ENCODE measurements at regions of chr11 and their contacts with region 1.

Region 1: GRCh38 chr11:128848815-128849455 is 18.2 kb downstream of the KCNJ1 start:
- DNase-seq: peak; percentile 77
- ATAC-seq: peak; percentile 72
- H3K4me3 ChIP-seq: no peak overlapping the region
- H3K4me3 Mint-ChIP-seq: no peak overlapping the region
- H3K27ac ChIP-seq: no peak overlapping the region
- H3K27ac Mint-ChIP-seq: peak overlapping the region; percentile 65
- H3K4me1 ChIP-seq: peaks cover 45 to 60% of the 10 kb centered on the region in 2 donors
- H3K4me1 Mint-ChIP-seq: peaks cover 52% of the 10 kb centered on the region
- H3K27me3 ChIP-seq: no peaks in the 10 kb centered on the region
- H3K27me3 Mint-ChIP-seq: no peaks in the 10 kb centered on the region
- CTCF ChIP-seq: peak; percentile 91

Region 2: GRCh38 chr11:128725630-128726319 is 123.2 kb before region 1 on chr11:
- CTCF ChIA-PET with region 1: no interaction called
- POLR2A ChIA-PET with region 1: no interaction called
- intact Hi-C with region 1: no loop called
- DNase-seq: peak; percentile 90
- ATAC-seq: peak; percentile 67
- H3K4me3 ChIP-seq: peak overlapping the region; percentile 27 to 57 (median 43)
- H3K4me3 Mint-ChIP-seq: peak overlapping the region; percentile 93
- H3K27ac ChIP-seq: peak overlapping the region; percentile 70 to 88
- H3K27ac Mint-ChIP-seq: peak overlapping the region; percentile 92
- H3K4me1 ChIP-seq: peaks cover 98 to 100% of the 10 kb centered on the region in 2 donors
- H3K4me1 Mint-ChIP-seq: peaks cover 96% of the 10 kb centered on the region
- H3K27me3 ChIP-seq: no peaks in the 10 kb centered on the region
- H3K27me3 Mint-ChIP-seq: no peaks in the 10 kb centered on the region
- CTCF ChIP-seq: no peak

Region 3: GRCh38 chr11:128776424-128777284 is 72.3 kb before region 1 on chr11:
- CTCF ChIA-PET with region 1: interaction called, 21 read pairs
- POLR2A ChIA-PET with region 1: interaction called, 3 read pairs
- intact Hi-C with region 1: no loop called
- DNase-seq: peak; percentile 58
- ATAC-seq: peak; percentile 35
- H3K4me3 ChIP-seq: no peak overlapping the region
- H3K4me3 Mint-ChIP-seq: no peak overlapping the region
- H3K27ac ChIP-seq: no peak overlapping the region
- H3K27ac Mint-ChIP-seq: peak overlapping the region; percentile 51
- H3K4me1 ChIP-seq: peaks cover 25 to 36% of the 10 kb centered on the region in 2 donors
- H3K4me1 Mint-ChIP-seq: peaks cover 42% of the 10 kb centered on the region
- H3K27me3 ChIP-seq: no peaks in the 10 kb centered on the region
- H3K27me3 Mint-ChIP-seq: no peaks in the 10 kb centered on the region
- CTCF ChIP-seq: peak; percentile 60

Region 4: DNA sequence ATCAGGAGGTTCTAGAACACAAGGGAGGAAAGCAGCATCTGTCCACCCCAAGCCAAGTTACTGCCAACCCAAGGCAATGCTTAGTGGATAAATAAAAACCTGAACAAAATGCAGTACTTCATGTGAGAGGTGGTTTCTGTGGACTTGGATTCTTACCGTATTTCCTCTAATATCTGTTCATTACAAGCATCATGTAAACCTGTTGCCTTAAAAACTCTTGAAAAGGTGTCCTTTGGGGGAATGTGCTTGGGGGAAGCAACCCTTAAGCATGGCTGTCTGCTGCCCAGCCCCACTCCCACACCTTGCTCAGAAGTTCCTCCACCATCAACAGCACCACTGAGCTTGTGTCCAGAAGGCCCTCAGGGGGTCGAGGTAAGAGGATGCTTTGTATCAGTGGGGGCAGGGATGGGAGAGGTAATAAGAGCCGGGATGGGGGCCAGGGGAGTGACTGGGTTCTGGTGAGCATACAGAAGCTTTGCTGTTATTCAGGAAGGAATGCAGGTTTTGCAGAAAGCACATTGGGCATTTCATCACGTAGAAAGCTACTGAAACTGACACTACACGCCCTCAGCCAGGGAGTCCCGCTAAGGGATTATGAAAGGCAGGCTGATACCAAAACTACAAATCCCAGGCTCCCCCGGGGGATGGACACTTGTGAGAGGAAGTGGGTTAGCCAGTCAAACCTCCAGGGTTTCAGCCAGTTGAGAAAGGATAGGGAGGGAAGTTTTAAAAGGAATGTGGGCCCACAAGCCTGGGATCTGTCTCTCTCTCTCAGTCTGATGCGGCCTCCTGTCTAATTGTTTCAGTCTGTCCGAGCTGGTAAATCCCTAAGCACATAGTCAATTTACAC is 33.9 kb before region 1 on chr11:
- CTCF ChIA-PET with region 1: no interaction called
- POLR2A ChIA-PET with region 1: no interaction called
- intact Hi-C with region 1: loop called (anchors 5 kb)
- DNase-seq: no peak
- ATAC-seq: no peak
- H3K4me3 ChIP-seq: no peak overlapping the region
- H3K4me3 Mint-ChIP-seq: no peak overlapping the region
- H3K27ac ChIP-seq: peak overlapping the region in 1 of 2 donors; percentile 9
- H3K27ac Mint-ChIP-seq: peak overlapping the region; percentile 37
- H3K4me1 ChIP-seq: no peaks in the 10 kb centered on the region
- H3K4me1 Mint-ChIP-seq: peaks cover 4% of the 10 kb centered on the region
- H3K27me3 ChIP-seq: no peaks in the 10 kb centered on the region
- H3K27me3 Mint-ChIP-seq: no peaks in the 10 kb centered on the region
- CTCF ChIP-seq: no peak

Region 5: DNA sequence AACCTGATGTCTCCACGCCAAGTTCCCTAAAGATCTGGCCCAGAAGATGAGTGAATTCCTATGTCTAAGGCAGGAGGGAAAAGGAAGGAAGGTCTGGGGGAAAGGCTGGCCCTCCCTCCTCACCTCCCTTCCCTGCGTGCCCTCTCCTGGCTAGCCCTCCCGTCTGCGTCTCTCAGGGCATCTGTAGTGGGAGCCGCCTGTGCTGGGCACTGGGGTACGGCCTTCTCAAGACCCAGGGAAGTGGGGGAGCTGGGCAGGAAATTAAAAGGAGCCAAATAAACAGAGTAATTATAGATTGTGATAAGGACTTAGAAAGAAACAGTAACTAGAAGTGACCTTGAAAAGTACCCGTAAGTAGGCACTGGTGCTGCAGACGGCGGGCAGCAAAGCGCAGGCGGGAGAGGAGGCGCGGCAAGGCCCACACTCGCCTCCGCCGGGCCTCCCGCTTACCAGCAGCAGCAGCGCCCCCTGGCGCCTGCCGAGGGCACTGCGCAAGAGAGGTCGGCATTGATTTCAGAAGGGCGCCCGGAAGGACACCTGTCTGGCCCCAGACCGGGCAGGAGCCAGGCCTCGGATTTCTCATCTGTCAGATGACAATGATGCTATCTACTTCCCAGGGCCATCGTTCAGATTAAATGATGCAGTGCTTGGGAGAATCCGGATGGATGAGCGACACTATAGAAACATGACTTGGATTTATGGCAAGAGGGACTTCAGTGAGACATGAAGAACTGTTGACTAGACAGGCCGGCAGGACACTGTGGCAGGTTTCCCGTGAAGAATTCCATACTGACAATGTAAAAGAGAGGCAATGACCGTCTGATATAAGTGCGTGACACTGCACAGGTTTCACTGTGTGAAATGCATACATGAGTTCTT is 10.9 kb after region 1 on chr11:
- CTCF ChIA-PET with region 1: interaction called, 22 read pairs
- POLR2A ChIA-PET with region 1: no interaction called
- intact Hi-C with region 1: loop called (anchors 2 kb)
- DNase-seq: peak; percentile 87
- ATAC-seq: peak; percentile 99
- H3K4me3 ChIP-seq: no peak overlapping the region
- H3K4me3 Mint-ChIP-seq: no peak overlapping the region
- H3K27ac ChIP-seq: no peak overlapping the region
- H3K27ac Mint-ChIP-seq: peak overlapping the region; percentile 59
- H3K4me1 ChIP-seq: peaks cover 9 to 17% of the 10 kb centered on the region in 2 donors
- H3K4me1 Mint-ChIP-seq: peaks cover 21% of the 10 kb centered on the region
- H3K27me3 ChIP-seq: no peaks in the 10 kb centered on the region
- H3K27me3 Mint-ChIP-seq: peaks cover 3% of the 10 kb centered on the region
- CTCF ChIP-seq: peak; percentile 100